Activated naive CD4-positive, alpha-beta T cell treated with anti-CD3 and anti-CD28 coated beads for 36 hours (primary cell): ENCODE measurements at regions of chr4 and their contacts with region 1.

Region 1: GRCh38 chr4:85291226-85291625 is 183.7 kb upstream of the ARHGAP24 start:
- DNase-seq: no peak
- H3K4me3 Mint-ChIP-seq: no peak overlapping the region
- H3K27ac Mint-ChIP-seq: no peak overlapping the region
- H3K4me1 Mint-ChIP-seq: no peaks in the 10 kb centered on the region
- H3K27me3 Mint-ChIP-seq: no peaks in the 10 kb centered on the region

Region 2: DNA sequence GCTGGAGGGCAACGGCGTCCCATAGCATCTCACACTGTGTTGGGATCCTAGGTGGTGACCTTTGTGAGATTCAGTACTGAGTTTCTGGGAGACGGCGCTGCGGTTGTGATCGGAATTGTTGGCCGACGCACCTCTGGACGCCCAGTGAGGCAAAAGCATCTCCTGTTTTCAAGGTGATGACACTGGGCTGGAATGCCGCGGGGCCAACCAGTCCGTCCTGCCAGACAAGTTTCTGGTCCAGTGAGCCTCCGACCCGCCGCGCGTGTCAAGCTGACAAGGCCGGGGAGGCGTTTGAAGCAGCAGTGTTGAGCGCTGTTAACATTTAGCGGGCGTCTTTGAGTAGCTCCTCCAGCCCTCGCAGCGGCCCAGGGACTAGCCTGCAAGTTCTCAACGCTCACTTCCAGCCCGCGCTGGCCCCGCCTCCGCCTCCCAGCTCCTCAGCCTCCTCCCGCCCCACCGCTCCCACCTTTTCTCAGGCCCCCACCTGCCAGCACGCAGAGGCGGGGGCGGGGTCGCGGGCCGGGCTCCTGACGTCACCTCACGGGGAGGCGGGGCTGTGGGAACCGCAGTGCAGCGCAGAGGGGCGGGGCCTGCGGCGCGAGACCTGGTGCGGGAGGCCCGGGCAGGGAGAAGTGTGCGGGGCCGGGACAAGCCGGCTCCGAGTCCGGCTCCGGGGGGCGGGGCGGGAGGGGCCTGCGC is 708.8 kb before region 1 on chr4:
- CTCF ChIA-PET with region 1: no interaction called
- intact Hi-C with region 1: no loop called
- DNase-seq: peak; percentile 95
- H3K4me3 Mint-ChIP-seq: peak overlapping the region; percentile 69
- H3K27ac Mint-ChIP-seq: no peak overlapping the region
- H3K4me1 Mint-ChIP-seq: peaks cover 12% of the 10 kb centered on the region
- H3K27me3 Mint-ChIP-seq: peaks cover 34% of the 10 kb centered on the region

Region 3: GRCh38 chr4:85318415-85318814 is 27.2 kb after region 1 on chr4:
- CTCF ChIA-PET with region 1: no interaction called
- intact Hi-C with region 1: loop called (anchors 1 kb)
- DNase-seq: no peak
- H3K4me3 Mint-ChIP-seq: no peak overlapping the region
- H3K27ac Mint-ChIP-seq: no peak overlapping the region
- H3K4me1 Mint-ChIP-seq: no peaks in the 10 kb centered on the region
- H3K27me3 Mint-ChIP-seq: no peaks in the 10 kb centered on the region